ENCODE measurements at regions of chr10 and their contacts with region 1.

Region 1: DNA sequence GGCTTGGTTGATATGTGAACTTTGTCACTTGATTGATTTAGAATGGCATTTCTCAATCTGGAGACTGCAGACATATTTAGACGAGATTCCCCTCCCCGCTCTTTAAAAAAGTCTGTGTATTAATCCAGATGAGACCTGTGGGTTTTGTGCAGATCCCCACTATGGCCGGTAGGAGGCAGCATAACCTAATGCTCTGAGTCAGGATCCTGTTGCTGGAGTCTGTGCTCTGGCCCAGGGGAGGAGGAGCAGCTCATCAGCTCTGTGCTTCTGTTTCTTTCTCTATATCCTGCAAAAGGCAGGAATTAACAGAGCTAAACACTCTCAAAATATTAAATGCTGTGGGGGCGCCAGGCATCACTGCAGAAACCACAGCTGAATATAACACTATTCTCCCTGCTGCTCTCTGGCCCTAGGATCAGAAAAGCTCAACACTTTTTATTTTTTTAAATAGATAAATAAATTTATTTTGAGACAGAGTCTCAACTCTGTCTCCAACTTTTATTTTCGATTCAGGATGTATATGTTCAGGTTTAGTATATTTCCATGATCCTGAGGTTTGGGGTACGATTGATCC is 23.9 kb upstream of the SEPHS1 start:
- DNase-seq: peak; percentile 83
- ATAC-seq: peak; percentile 100
- H3K4me3 ChIP-seq: no peak overlapping the region
- H3K27ac ChIP-seq: no peak overlapping the region
- H3K4me1 ChIP-seq: no peaks in the 10 kb centered on the region
- H3K27me3 ChIP-seq: peaks cover 8% of the 10 kb centered on the region
- CTCF ChIP-seq: peak; percentile 98
- POLR2A ChIP-seq: 0 out of 2 replicates have a peak, but pooled peaks have one; percentile 38
- RAD21 ChIP-seq: peak; percentile 97

Region 2: GRCh38 chr10:12348870-12349628 is 1022.9 kb before region 1 on chr10 and contains the start of gene CAMK1D:
- CTCF ChIA-PET with region 1: no interaction called
- POLR2A ChIA-PET with region 1: no interaction called
- dilution Hi-C with region 1: no loop called
- in situ Hi-C with region 1: no loop called
- intact Hi-C with region 1: no loop called
- DNase-seq: peak; percentile 66
- ATAC-seq: peak; percentile 85
- H3K4me3 ChIP-seq: peak within 1 kb of the TSS; percentile 84
- H3K27ac ChIP-seq: peak within 1 kb of the TSS; percentile 37; the same call in 1 of the 2 replicates
- H3K4me1 ChIP-seq: no peaks in the 10 kb centered on the region
- H3K27me3 ChIP-seq: peaks cover 4% of the 10 kb centered on the region; the same call in 1 of the 2 replicates
- CTCF ChIP-seq: peak; percentile 43
- POLR2A ChIP-seq: peak; percentile 60; the same call in 1 of the 2 replicates
- RAD21 ChIP-seq: no peak; the same call in 1 of the 2 replicates
- total RNA-seq, gene CAMK1D: 4.2 and 5.0 TPM in 2 replicates

Region 3: GRCh38 chr10:13440185-13441061 is 68.4 kb after region 1 on chr10:
- CTCF ChIA-PET with region 1: interaction called, 11 read pairs
- POLR2A ChIA-PET with region 1: no interaction called
- dilution Hi-C with region 1: no loop called
- in situ Hi-C with region 1: no loop called
- intact Hi-C with region 1: loop called (anchors 1 kb)
- DNase-seq: no peak
- ATAC-seq: peak; percentile 93
- H3K4me3 ChIP-seq: no peak overlapping the region
- H3K27ac ChIP-seq: no peak overlapping the region
- H3K4me1 ChIP-seq: peaks cover 2% of the 10 kb centered on the region; the same call in 1 of the 2 replicates
- H3K27me3 ChIP-seq: peaks cover 28% of the 10 kb centered on the region
- CTCF ChIP-seq: peak; percentile 74
- POLR2A ChIP-seq: no peak
- RAD21 ChIP-seq: peak; percentile 55

Region 4: DNA sequence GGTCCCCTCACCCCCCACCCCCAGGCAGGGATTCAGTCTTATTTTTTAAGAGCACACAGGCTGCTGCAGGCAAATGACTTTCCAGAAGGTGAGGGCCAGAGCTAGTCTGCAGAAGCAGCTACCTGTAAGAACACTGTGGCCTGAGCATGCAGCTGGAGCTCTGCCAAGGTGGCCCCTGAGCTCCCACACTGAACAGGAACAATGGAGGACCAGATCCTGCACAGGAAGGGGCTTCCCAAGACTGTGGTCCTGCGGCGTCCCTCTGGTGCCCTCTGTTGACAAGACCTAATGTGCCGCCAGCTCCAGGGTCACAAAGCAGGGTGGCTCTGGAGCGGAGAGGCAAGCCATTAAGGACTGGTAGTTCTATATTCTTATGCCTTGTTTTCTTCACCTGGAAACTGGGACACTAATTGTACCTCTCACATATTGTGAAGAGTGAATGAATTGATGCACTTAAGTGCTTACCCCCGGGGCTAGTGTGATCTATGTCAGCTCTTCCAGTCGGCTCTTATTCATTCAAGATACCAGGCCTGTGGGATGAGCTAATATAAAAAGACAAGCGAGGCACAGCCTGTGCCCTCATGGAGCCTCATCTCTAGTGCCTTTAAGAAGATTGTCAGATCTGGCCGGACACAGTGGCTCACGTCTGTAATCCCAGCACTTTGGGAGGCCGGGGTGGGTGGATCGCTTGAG is 164.8 kb after region 1 on chr10:
- CTCF ChIA-PET with region 1: interaction called, 8 read pairs
- POLR2A ChIA-PET with region 1: interaction called, 6 read pairs
- dilution Hi-C with region 1: no loop called
- in situ Hi-C with region 1: loop called (anchors 10 kb)
- intact Hi-C with region 1: loop called (anchors 1 kb)
- DNase-seq: peak; percentile 41
- ATAC-seq: peak; percentile 98
- H3K4me3 ChIP-seq: no peak overlapping the region
- H3K27ac ChIP-seq: no peak overlapping the region
- H3K4me1 ChIP-seq: no peaks in the 10 kb centered on the region
- H3K27me3 ChIP-seq: peaks cover 24% of the 10 kb centered on the region
- CTCF ChIP-seq: peak; percentile 67
- POLR2A ChIP-seq: no peak
- RAD21 ChIP-seq: peak; percentile 66

Region 5: GRCh38 chr10:13659897-13660550 is 288.0 kb after region 1 on chr10:
- CTCF ChIA-PET with region 1: no interaction called
- POLR2A ChIA-PET with region 1: no interaction called
- dilution Hi-C with region 1: no loop called
- in situ Hi-C with region 1: no loop called
- intact Hi-C with region 1: loop called (anchors 5 kb)
- DNase-seq: peak; percentile 50
- ATAC-seq: peak; percentile 81
- H3K4me3 ChIP-seq: no peak overlapping the region
- H3K27ac ChIP-seq: peak overlapping the region; percentile 18; the same call in 1 of the 2 replicates
- H3K4me1 ChIP-seq: peaks cover 14% of the 10 kb centered on the region
- H3K27me3 ChIP-seq: no peaks in the 10 kb centered on the region
- CTCF ChIP-seq: peak; percentile 82
- POLR2A ChIP-seq: no peak
- RAD21 ChIP-seq: peak; percentile 92